Calu3 (cell line): ENCODE measurements at regions of chr2 and their contacts with region 1.

Region 1: GRCh38 chr2:159124441-159124911 is 156.0 kb downstream of the TANC1 start:
- DNase-seq: peak; percentile 51
- H3K4me3 Mint-ChIP-seq: no peak overlapping the region
- H3K27ac Mint-ChIP-seq: peak overlapping the region; percentile 78
- H3K4me1 Mint-ChIP-seq: peaks cover 47% of the 10 kb centered on the region
- H3K27me3 Mint-ChIP-seq: no peaks in the 10 kb centered on the region
- CTCF ChIP-seq: no peak

Region 2: GRCh38 chr2:158968396-158969161 is 155.9 kb before region 1 on chr2 and contains the start of gene TANC1:
- CTCF ChIA-PET with region 1: no interaction called
- intact Hi-C with region 1: no loop called
- DNase-seq: peak; percentile 95
- H3K4me3 Mint-ChIP-seq: peak within 1 kb of the TSS; percentile 99
- H3K27ac Mint-ChIP-seq: peak within 1 kb of the TSS; percentile 88
- H3K4me1 Mint-ChIP-seq: peaks cover 36% of the 10 kb centered on the region
- H3K27me3 Mint-ChIP-seq: no peaks in the 10 kb centered on the region
- CTCF ChIP-seq: no peak
- total RNA-seq, gene TANC1: 41.2 and 43.3 TPM in 2 replicates

Region 3: DNA sequence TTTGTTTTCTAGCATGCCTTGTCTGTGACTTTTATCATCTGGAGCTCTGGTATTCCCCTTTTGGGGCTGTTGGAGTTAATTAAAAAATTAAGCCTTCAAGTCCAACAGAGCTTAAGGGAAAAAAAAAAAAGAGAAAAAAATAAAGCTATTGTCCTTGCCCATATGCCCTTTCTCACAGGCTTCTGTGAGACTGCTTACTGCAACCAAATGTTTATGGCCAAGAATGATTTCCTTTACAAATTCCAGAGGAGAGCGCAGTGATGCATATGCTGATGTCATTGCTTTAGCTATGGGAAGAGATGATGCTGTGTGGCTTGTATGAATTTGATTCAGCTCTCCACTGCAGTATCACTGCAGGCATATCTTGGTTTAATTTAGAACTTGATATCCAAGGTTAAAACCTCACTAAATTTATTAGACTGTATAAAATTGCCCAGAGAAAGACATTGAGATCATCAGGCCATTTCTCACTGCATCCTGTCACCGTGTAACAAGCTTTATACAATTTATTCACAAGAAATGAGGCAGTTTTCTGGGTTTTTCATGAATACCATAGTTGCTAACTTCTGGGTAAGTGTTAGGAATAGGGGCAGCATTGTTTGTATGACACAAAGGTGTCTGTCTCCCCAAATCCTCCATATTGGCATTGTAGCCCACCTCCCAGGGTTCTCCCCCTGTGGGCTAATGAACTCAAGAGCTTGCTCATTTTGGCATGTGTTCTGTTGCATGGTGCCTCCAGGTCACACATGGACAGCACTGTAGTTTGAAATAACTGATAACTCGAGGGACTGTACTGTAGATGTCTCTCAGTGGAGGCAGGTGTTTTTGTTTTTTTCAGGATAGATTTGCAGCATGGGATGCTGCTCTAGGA is 71.1 kb before region 1 on chr2:
- CTCF ChIA-PET with region 1: no interaction called
- intact Hi-C with region 1: no loop called
- DNase-seq: no peak
- H3K4me3 Mint-ChIP-seq: no peak overlapping the region
- H3K27ac Mint-ChIP-seq: no peak overlapping the region
- H3K4me1 Mint-ChIP-seq: peaks cover 26% of the 10 kb centered on the region
- H3K27me3 Mint-ChIP-seq: no peaks in the 10 kb centered on the region
- CTCF ChIP-seq: no peak

Region 4: GRCh38 chr2:159153463-159153862 is 29.0 kb after region 1 on chr2:
- CTCF ChIA-PET with region 1: interaction called, 11 read pairs
- intact Hi-C with region 1: no loop called
- DNase-seq: peak; percentile 68
- H3K4me3 Mint-ChIP-seq: peak overlapping the region; percentile 23
- H3K27ac Mint-ChIP-seq: peak overlapping the region; percentile 79
- H3K4me1 Mint-ChIP-seq: peaks cover 13% of the 10 kb centered on the region
- H3K27me3 Mint-ChIP-seq: no peaks in the 10 kb centered on the region
- CTCF ChIP-seq: no peak

Region 5: GRCh38 chr2:159256159-159256558 is 131.7 kb after region 1 on chr2:
- CTCF ChIA-PET with region 1: no interaction called
- intact Hi-C with region 1: no loop called
- DNase-seq: no peak
- H3K4me3 Mint-ChIP-seq: no peak overlapping the region
- H3K27ac Mint-ChIP-seq: no peak overlapping the region
- H3K4me1 Mint-ChIP-seq: no peaks in the 10 kb centered on the region
- H3K27me3 Mint-ChIP-seq: no peaks in the 10 kb centered on the region
- CTCF ChIP-seq: no peak

Region 6: GRCh38 chr2:159484532-159484931 is 360.1 kb after region 1 on chr2:
- CTCF ChIA-PET with region 1: no interaction called
- intact Hi-C with region 1: no loop called
- DNase-seq: no peak
- H3K4me3 Mint-ChIP-seq: no peak overlapping the region
- H3K27ac Mint-ChIP-seq: no peak overlapping the region
- H3K4me1 Mint-ChIP-seq: no peaks in the 10 kb centered on the region
- H3K27me3 Mint-ChIP-seq: no peaks in the 10 kb centered on the region
- CTCF ChIP-seq: no peak